ENCODE measurements at regions of chr15 and their contacts with region 1.

Region 1: DNA sequence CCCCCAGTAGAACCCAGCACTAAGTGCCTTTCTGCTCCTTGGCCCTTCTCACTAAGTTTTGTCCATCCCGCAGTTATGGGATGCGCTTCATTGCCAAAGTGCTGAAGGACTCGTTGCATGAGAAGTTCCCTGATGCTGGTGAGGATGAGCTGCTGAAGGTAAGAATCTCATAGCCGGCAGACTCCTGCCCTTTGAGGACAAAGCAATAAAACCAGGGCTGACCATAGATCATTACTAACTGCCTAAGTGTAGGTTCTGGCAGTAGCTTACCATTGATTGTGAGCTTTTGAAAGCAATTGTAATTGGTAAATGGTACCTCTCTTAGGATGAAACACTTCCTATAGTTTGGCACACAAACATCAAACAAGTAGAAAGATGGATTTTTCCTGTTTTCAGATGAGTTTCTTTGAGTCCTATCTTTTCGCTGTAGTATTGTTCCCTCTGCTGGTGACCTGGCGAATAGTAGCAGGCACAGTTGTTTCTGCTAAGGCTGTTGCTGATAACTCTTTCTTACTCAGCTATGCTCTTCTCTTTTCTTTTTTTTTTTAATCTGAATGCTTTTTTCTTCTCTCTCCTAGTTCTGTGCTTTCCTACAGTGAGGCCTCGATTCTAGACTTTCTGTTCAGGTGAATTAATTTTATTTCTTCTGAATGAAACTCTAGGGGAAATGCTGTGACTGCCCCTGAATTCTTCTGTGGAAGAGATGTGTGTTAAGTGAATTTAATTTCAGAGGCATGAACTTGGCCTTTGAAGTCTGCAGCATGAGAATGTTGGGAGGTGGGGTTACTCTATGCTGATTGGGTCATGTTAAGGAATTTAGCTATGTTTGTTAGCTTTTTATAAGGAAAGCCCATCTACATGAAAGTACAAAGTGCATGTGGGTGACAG is 47.4 kb upstream of the CRTC3 start:
- DNase-seq: peak; percentile 66
- ATAC-seq: peak; percentile 80
- H3K4me3 ChIP-seq: no peak overlapping the region
- H3K27ac ChIP-seq: no peak overlapping the region
- H3K4me1 ChIP-seq: no peaks in the 10 kb centered on the region
- H3K27me3 ChIP-seq: no peaks in the 10 kb centered on the region
- CTCF ChIP-seq: peak; percentile 77
- POLR2A ChIP-seq: no peak
- RAD21 ChIP-seq: peak; percentile 89

Region 2: DNA sequence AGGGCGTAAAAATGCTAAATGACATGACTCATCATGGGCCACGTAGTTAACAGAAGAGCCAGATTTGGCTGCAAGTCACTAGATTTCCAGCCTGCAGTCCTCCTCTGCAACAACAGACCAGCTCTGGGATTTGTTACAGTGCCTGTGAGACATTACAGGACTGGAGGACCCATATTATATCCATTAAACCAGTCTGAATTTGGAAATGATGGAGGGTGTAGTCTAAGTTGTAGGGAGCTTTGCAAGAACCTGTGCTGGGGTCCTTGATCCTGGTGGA is 119.5 kb before region 1 on chr15:
- CTCF ChIA-PET with region 1: no interaction called
- POLR2A ChIA-PET with region 1: interaction called, 4 read pairs
- dilution Hi-C with region 1: no loop called
- in situ Hi-C with region 1: no loop called
- intact Hi-C with region 1: loop called (anchors 1 kb)
- DNase-seq: peak; percentile 92
- ATAC-seq: peak; percentile 70
- H3K4me3 ChIP-seq: no peak overlapping the region
- H3K27ac ChIP-seq: peak overlapping the region; percentile 54; the same call in 1 of the 2 replicates
- H3K4me1 ChIP-seq: peaks cover 21% of the 10 kb centered on the region
- H3K27me3 ChIP-seq: no peaks in the 10 kb centered on the region
- CTCF ChIP-seq: no peak
- POLR2A ChIP-seq: no peak
- RAD21 ChIP-seq: no peak

Region 3: GRCh38 chr15:90436952-90437351 is 45.4 kb before region 1 on chr15:
- CTCF ChIA-PET with region 1: no interaction called
- POLR2A ChIA-PET with region 1: no interaction called
- dilution Hi-C with region 1: no loop called
- in situ Hi-C with region 1: no loop called
- intact Hi-C with region 1: loop called (anchors 5 kb)
- DNase-seq: no peak
- ATAC-seq: no peak
- H3K4me3 ChIP-seq: no peak overlapping the region
- H3K27ac ChIP-seq: no peak overlapping the region
- H3K4me1 ChIP-seq: no peaks in the 10 kb centered on the region; the same call in 1 of the 2 replicates
- H3K27me3 ChIP-seq: no peaks in the 10 kb centered on the region
- CTCF ChIP-seq: no peak
- POLR2A ChIP-seq: no peak
- RAD21 ChIP-seq: no peak

Region 4: DNA sequence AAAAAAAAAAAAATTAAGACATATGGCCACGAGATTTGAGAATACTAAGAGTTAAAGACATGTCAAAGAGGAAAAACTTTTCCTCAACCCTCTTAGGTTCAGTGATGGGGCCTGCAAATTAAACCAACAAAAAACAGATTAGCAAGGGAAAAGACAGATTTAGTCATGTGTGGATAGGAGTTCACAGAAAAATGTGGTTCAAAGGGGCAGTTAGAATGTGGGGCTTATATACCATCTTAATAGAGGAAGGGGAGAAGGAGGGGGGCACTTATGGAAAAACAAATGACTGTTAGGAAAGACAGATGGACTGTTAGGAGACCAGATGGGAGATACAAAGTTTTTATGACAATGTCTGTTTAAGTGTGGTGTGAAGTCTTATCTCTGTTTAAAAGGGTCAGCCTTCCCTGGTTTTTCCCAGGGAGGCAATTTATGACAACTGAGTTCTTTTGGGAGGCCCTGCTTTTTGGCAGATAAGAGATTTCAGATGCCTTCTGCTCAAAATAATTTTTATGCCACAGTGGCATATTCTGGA is 317.3 kb after region 1 on chr15:
- CTCF ChIA-PET with region 1: no interaction called
- POLR2A ChIA-PET with region 1: no interaction called
- dilution Hi-C with region 1: no loop called
- in situ Hi-C with region 1: no loop called
- intact Hi-C with region 1: no loop called
- DNase-seq: no peak
- ATAC-seq: no peak
- H3K4me3 ChIP-seq: no peak overlapping the region
- H3K27ac ChIP-seq: no peak overlapping the region
- H3K4me1 ChIP-seq: peaks cover 2% of the 10 kb centered on the region; the same call in 1 of the 2 replicates
- H3K27me3 ChIP-seq: no peaks in the 10 kb centered on the region
- CTCF ChIP-seq: no peak
- POLR2A ChIP-seq: no peak
- RAD21 ChIP-seq: no peak